Naive thymus-derived CD4-positive, alpha-beta T cell (primary cell): ENCODE measurements at regions of chr3 and their contacts with region 1.

Region 1: DNA sequence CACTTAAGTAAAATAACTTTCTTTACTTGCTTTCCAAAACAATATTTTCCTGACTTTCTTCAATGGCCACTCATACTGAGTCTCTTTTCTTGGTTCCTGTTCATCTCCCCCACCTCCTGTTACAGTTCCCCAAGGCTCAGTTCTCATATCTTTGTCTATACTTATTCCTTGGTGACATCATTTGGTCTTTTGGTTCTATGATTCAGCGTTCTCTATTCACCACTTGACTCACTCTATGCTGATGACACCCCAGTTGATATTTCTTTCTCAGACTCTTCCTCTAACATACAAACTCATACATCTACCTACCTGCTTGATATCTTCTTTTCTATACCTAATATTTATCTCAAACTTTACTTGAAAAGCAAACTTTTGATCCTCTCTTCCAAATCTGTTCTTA is 85.0 kb upstream of the P3H2 start:
- DNase-seq: no peak
- ATAC-seq: peak; percentile 59
- H3K4me3 ChIP-seq: no peak overlapping the region
- H3K4me3 Mint-ChIP-seq: no peak overlapping the region
- H3K27ac ChIP-seq: no peak overlapping the region
- H3K27ac Mint-ChIP-seq: no peak overlapping the region
- H3K4me1 ChIP-seq: no peaks in the 10 kb centered on the region
- H3K4me1 Mint-ChIP-seq: peaks cover 0 to 4% (median 0%) of the 10 kb centered on the region in 7 donors
- H3K27me3 ChIP-seq: no peaks in the 10 kb centered on the region
- H3K27me3 Mint-ChIP-seq: peaks cover 4 to 40% (median 9%) of the 10 kb centered on the region in 5 donors

Region 2: DNA sequence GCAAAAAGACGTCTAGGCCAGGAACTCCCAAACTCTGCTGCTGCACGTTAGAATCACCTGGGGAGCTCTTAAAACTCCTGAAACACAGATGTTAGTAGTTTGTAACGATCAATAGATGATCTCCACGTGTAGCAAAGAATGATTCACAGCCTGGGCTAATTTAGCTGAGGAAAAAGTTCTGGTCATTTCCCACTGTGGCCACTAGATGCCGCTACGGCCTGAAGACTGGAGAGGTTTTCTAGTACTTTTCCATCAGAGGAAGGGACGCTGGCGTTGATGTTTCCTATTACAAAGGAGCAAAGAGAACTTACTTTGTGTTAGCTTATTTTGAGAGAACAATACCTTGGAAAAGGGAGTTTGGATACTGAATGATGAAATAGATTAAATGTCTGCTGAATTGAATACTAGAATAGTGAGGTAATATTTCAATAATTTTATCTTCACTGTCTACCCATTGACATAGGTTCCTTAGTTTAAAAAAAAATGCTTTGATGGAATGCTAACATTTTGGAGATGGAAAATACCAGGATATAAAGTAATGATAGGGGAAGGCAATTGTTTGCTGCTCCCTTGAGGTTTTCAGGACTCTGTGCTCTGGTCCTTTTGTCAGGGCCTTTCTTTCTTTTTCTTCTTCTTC is 244.1 kb before region 1 on chr3:
- CTCF ChIA-PET with region 1: no interaction called
- POLR2A ChIA-PET with region 1: no interaction called
- intact Hi-C with region 1: loop called in 1 of 2 experiments (anchors 1 kb)
- DNase-seq: peak in 8 of 9 donors; percentile 31 to 67 (median 44)
- ATAC-seq: peak; percentile 80
- H3K4me3 ChIP-seq: no peak overlapping the region
- H3K4me3 Mint-ChIP-seq: peak overlapping the region in 1 of 10 donors; percentile 29
- H3K27ac ChIP-seq: no peak overlapping the region
- H3K27ac Mint-ChIP-seq: no peak overlapping the region
- H3K4me1 ChIP-seq: no peaks in the 10 kb centered on the region
- H3K4me1 Mint-ChIP-seq: peaks cover 2 to 10% (median 6%) of the 10 kb centered on the region in 7 donors
- H3K27me3 ChIP-seq: no peaks in the 10 kb centered on the region
- H3K27me3 Mint-ChIP-seq: peaks cover 7 to 19% (median 15%) of the 10 kb centered on the region in 5 donors

Region 3: GRCh38 chr3:190443257-190443656 is 237.5 kb after region 1 on chr3:
- CTCF ChIA-PET with region 1: no interaction called
- POLR2A ChIA-PET with region 1: no interaction called
- intact Hi-C with region 1: no loop called
- DNase-seq: no peak
- ATAC-seq: no peak
- H3K4me3 ChIP-seq: no peak overlapping the region
- H3K4me3 Mint-ChIP-seq: no peak overlapping the region
- H3K27ac ChIP-seq: no peak overlapping the region
- H3K27ac Mint-ChIP-seq: no peak overlapping the region
- H3K4me1 ChIP-seq: peaks cover 0 to 4% of the 10 kb centered on the region in 2 donors
- H3K4me1 Mint-ChIP-seq: peaks cover 3 to 13% (median 9%) of the 10 kb centered on the region in 7 donors
- H3K27me3 ChIP-seq: no peaks in the 10 kb centered on the region
- H3K27me3 Mint-ChIP-seq: peaks cover 4 to 9% (median 6%) of the 10 kb centered on the region in 5 donors